Activated CD4-positive, alpha-beta T cell treated with anti-CD3 and anti-CD28 coated beads for 36 hours (primary cell): ENCODE measurements at regions of chr10 and their contacts with region 1.

Region 1: GRCh38 chr10:25747084-25747483 is 186.9 kb upstream of the MYO3A start:
- DNase-seq: no peak
- ATAC-seq: no peak
- H3K4me3 Mint-ChIP-seq: no peak overlapping the region
- H3K27ac Mint-ChIP-seq: no peak overlapping the region
- H3K4me1 Mint-ChIP-seq: no peaks in the 10 kb centered on the region
- H3K27me3 Mint-ChIP-seq: peaks cover 4% of the 10 kb centered on the region

Region 2: GRCh38 chr10:25068152-25069058 is 678.7 kb before region 1 on chr10:
- CTCF ChIA-PET with region 1: no interaction called
- POLR2A ChIA-PET with region 1: no interaction called
- intact Hi-C with region 1: no loop called
- DNase-seq: no peak
- ATAC-seq: peak; percentile 44
- H3K4me3 Mint-ChIP-seq: no peak overlapping the region
- H3K27ac Mint-ChIP-seq: no peak overlapping the region
- H3K4me1 Mint-ChIP-seq: peaks cover 6% of the 10 kb centered on the region
- H3K27me3 Mint-ChIP-seq: peaks cover 2% of the 10 kb centered on the region

Region 3: GRCh38 chr10:25226775-25227682 is 520.1 kb before region 1 on chr10:
- CTCF ChIA-PET with region 1: no interaction called
- POLR2A ChIA-PET with region 1: no interaction called
- intact Hi-C with region 1: no loop called
- DNase-seq: peak; percentile 48
- ATAC-seq: no peak
- H3K4me3 Mint-ChIP-seq: no peak overlapping the region
- H3K27ac Mint-ChIP-seq: no peak overlapping the region
- H3K4me1 Mint-ChIP-seq: no peaks in the 10 kb centered on the region
- H3K27me3 Mint-ChIP-seq: no peaks in the 10 kb centered on the region

Region 4: DNA sequence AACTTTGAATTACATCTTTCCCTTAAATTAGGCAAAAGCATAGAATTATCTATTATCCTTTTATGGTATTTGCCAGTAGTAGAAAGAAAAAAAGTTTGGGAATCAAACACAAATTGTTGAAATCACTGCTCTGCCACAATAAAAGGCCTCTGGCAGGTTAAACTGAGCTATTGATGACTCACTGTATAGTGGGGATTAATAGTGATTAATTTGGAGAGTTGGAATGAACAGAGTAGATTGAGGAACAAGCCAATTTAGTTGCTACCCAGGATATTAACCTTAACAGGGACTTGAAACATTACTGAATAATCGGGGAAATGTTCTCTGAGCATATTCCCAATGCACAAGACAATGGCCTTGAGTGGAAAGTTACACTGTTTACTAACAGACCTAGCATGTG is 1441.2 kb after region 1 on chr10:
- CTCF ChIA-PET with region 1: no interaction called
- POLR2A ChIA-PET with region 1: no interaction called
- intact Hi-C with region 1: loop called in 1 of 2 experiments (anchors 10 kb)
- DNase-seq: no peak
- ATAC-seq: no peak
- H3K4me3 Mint-ChIP-seq: no peak overlapping the region
- H3K27ac Mint-ChIP-seq: no peak overlapping the region
- H3K4me1 Mint-ChIP-seq: no peaks in the 10 kb centered on the region
- H3K27me3 Mint-ChIP-seq: no peaks in the 10 kb centered on the region